ENCODE measurements at regions of chr3 and their contacts with region 1.

Region 1: GRCh38 chr3:60013241-60013640 is 963.4 kb upstream of the CFAP20DC start:
- DNase-seq: no peak
- H3K4me3 Mint-ChIP-seq: no peak overlapping the region
- H3K27ac Mint-ChIP-seq: peak overlapping the region; percentile 99
- H3K4me1 Mint-ChIP-seq: peaks cover 90% of the 10 kb centered on the region
- H3K27me3 Mint-ChIP-seq: no peaks in the 10 kb centered on the region

Region 2: GRCh38 chr3:60001369-60001768 is 11.9 kb before region 1 on chr3:
- CTCF ChIA-PET with region 1: no interaction called
- DNase-seq: no peak
- H3K4me3 Mint-ChIP-seq: no peak overlapping the region
- H3K27ac Mint-ChIP-seq: peak overlapping the region; percentile 17
- H3K4me1 Mint-ChIP-seq: peaks cover 86% of the 10 kb centered on the region
- H3K27me3 Mint-ChIP-seq: no peaks in the 10 kb centered on the region

Region 3: DNA sequence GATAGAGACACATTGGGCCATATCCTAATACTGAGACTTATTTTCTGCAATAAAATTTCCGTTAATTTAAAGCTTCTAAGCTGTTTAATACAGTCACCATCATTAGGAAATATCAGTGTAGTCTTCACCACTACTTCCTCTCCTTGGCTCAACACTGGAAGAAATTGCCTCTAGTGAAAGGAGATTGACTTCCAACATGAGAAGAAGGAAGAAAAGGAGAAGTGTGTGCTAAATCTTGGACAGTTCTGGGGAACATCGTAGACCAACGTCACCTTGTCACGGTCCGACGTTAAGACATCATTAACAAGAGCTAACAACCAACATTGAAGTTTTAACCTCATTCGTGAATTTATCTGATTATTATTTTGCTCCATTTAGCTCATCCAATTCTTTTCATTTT is 23.6 kb after region 1 on chr3:
- CTCF ChIA-PET with region 1: no interaction called
- DNase-seq: no peak
- H3K4me3 Mint-ChIP-seq: no peak overlapping the region
- H3K27ac Mint-ChIP-seq: no peak overlapping the region
- H3K4me1 Mint-ChIP-seq: peaks cover 31% of the 10 kb centered on the region
- H3K27me3 Mint-ChIP-seq: no peaks in the 10 kb centered on the region

Region 4: GRCh38 chr3:60079076-60079475 is 65.8 kb after region 1 on chr3:
- CTCF ChIA-PET with region 1: interaction called, 12 read pairs
- DNase-seq: peak; percentile 78
- H3K4me3 Mint-ChIP-seq: peak overlapping the region; percentile 79
- H3K27ac Mint-ChIP-seq: peak overlapping the region; percentile 90
- H3K4me1 Mint-ChIP-seq: peaks cover 61% of the 10 kb centered on the region
- H3K27me3 Mint-ChIP-seq: no peaks in the 10 kb centered on the region